Activated T-helper 1 cell treated with anti-CD3 and anti-CD28 coated beads, Interleukin-12 subunit alpha, Interleukin-12 subunit beta, Interleukin-2, Interleukin-4 antibody, amounts not matched to agents 30 ng/mL and 10 ng/mL and 1 ng/mL, durations not matched to agents 14 hours and 24 hours and 36 hours (primary cell): ENCODE measurements at regions of chr17 and their contacts with region 1.

Region 1: DNA sequence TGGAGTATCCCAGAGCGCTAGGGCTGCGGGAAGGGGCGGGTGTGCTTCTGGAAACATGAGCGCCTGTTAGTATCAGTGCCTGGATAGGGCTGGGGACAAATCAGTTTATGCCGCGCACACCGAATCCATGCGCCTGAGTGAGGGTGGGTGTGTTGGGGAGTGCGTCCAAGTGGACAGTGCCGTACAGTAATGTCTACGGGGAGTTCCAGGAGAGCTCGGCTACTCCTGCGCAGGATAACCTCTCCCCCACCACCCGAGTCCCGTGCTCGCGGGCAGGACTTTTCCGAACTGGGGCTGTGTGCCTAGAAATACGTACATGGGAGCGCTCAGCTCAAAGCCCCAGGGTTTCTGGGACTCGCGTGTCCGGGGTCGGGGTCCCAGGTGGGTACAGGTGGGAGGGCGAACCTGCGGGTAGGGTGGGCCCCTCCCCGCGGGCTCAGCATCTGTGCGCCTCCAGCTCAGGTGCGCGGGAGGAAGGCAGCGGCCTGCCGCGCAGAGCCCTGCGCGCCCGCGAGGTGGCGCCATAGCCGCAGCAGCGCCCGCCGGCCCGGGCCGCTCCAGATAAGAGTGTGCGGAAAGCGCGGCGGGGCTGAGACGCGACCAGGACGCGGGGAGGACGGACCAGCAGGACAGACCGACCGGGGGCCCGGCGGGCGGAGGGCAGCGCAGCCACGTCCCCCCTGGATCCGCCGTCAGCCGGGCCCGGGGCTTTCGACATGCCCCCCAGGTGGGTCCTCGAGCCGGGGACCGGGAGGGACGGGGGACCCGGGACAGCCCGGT is at the start of gene HIC1:
- DNase-seq: peak; percentile 85
- H3K4me3 Mint-ChIP-seq: peak within 1 kb of the TSS; percentile 84
- H3K27ac Mint-ChIP-seq: peak within 1 kb of the TSS; percentile 91
- H3K4me1 Mint-ChIP-seq: peaks cover 20% of the 10 kb centered on the region
- H3K27me3 Mint-ChIP-seq: peaks cover 12% of the 10 kb centered on the region
- total RNA-seq, gene HIC1: 45.6 and 47.0 TPM in 2 replicates

Region 2: GRCh38 chr17:2029911-2030778 is 24.6 kb before region 1 on chr17 and contains the start of gene DPH1:
- intact Hi-C with region 1: loop called (anchors 1 kb)
- DNase-seq: peak; percentile 85
- H3K4me3 Mint-ChIP-seq: peak within 1 kb of the TSS; percentile 92
- H3K27ac Mint-ChIP-seq: peak within 1 kb of the TSS; percentile 75
- H3K4me1 Mint-ChIP-seq: peaks cover 13% of the 10 kb centered on the region
- H3K27me3 Mint-ChIP-seq: peaks cover 35% of the 10 kb centered on the region
- total RNA-seq, gene DPH1: 49.4 and 61.3 TPM in 2 replicates

Region 3: DNA sequence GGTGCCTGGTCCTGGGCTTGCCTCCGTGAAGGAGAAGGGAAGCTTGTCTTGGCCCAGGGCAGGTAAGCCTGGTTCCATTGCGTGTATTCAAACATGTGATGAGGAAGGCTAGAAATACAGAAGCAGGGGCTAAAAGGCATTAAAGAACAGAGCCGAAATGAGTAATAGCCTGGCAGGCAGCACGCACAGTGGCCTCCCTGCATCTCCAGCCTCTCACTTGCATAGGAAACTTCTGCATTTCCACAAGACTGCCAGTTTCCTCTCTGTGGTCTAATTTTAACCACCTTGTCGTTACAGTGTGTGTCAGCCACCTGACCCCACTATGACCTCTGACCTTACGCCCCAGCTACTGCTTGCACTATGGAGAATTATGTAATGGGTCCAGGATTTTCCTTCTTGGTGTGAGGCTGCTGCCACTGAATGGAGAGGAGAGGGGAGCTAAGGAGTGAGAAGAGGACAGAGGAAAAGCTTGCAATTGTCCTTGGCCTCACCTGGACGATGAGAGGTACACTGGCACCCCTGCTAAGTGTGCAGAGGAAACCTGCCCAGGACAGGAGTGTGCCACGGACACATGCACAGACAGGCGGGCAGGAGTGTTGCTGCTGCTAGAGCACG is 33.0 kb after region 1 on chr17:
- intact Hi-C with region 1: loop called (anchors 5 kb)
- DNase-seq: peak; percentile 54
- H3K4me3 Mint-ChIP-seq: peak overlapping the region; percentile 66
- H3K27ac Mint-ChIP-seq: peak overlapping the region; percentile 86
- H3K4me1 Mint-ChIP-seq: peaks cover 93% of the 10 kb centered on the region
- H3K27me3 Mint-ChIP-seq: peaks cover 1% of the 10 kb centered on the region

Region 4: GRCh38 chr17:2266045-2266864 is 211.6 kb after region 1 on chr17:
- intact Hi-C with region 1: loop called (anchors 1 kb)
- DNase-seq: peak; percentile 88
- H3K4me3 Mint-ChIP-seq: peak overlapping the region; percentile 74
- H3K27ac Mint-ChIP-seq: peak overlapping the region; percentile 100
- H3K4me1 Mint-ChIP-seq: peaks cover 82% of the 10 kb centered on the region
- H3K27me3 Mint-ChIP-seq: no peaks in the 10 kb centered on the region

Region 5: DNA sequence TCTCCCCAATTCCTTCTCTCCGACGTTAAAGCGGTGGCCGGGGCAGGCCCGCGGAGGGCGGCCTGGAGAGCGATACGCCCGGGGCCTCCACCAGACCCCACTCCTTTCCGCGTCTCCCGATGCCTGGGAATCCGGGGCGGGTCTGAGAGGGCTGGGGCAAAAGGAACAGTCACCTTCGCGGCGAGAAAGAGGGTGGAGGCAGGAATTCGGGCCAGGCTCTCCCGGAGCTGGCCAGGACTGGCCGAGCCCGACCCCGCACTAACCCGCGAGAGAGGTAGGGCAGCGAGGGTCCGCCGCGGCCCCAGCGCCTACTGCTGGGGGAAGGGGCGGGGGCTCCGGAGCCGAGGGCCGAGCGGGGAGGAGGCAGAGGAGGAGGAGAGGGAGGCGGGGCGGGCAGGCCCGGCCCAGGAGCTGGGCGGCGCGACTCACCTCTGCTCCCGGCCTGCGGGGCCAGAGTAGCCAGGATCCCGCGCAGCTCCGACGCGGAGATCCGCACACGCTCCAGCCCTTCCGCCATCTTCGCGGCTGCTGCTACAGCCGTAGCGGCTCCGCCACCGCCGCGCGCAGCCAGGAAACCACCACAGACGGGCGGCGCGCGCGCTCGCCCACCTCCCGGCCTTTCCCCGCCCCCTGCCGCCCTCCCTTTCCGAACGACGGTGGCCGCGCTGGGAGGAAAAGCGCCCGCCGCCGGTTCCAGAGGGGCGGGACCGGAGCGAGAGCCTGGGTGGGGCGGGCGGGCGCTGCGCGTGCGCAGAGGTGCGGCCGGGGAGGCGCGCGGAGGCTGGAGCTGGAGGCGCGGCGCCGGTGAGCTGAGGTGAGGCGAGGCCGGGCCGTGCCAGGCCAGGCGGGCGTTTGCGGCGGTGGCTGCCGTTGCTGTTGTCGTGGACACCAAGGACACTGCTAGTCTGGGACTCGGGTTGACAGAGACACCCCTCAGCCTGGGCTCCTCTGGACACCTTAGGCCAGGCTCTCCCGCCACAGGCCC is 248.8 kb after region 1 on chr17 and contains the starts of genes SMG6 and SRR:
- intact Hi-C with region 1: loop called (anchors 1 kb)
- DNase-seq: peak; percentile 88
- H3K4me3 Mint-ChIP-seq: peak within 1 kb of the TSS; percentile 92
- H3K27ac Mint-ChIP-seq: peak within 1 kb of the TSS; percentile 85
- H3K4me1 Mint-ChIP-seq: peaks cover 46% of the 10 kb centered on the region
- H3K27me3 Mint-ChIP-seq: no peaks in the 10 kb centered on the region
- total RNA-seq, gene SMG6: 35.3 and 39.5 TPM in 2 replicates
- total RNA-seq, gene SRR: 14.9 and 17.4 TPM in 2 replicates

Region 6: GRCh38 chr17:2347547-2348307 is 293.0 kb after region 1 on chr17:
- intact Hi-C with region 1: loop called (anchors 5 kb)
- DNase-seq: no peak
- H3K4me3 Mint-ChIP-seq: no peak overlapping the region
- H3K27ac Mint-ChIP-seq: no peak overlapping the region
- H3K4me1 Mint-ChIP-seq: no peaks in the 10 kb centered on the region
- H3K27me3 Mint-ChIP-seq: peaks cover 2% of the 10 kb centered on the region